ENCODE measurements at regions of chr11 and their contacts with region 1.

Region 1: GRCh38 chr11:47176328-47177228 is at the start of gene ARFGAP2:
- DNase-seq: peak; percentile 97
- H3K4me3 Mint-ChIP-seq: peak within 1 kb of the TSS; percentile 98
- H3K27ac Mint-ChIP-seq: peak within 1 kb of the TSS; percentile 100
- H3K4me1 Mint-ChIP-seq: peaks cover 40% of the 10 kb centered on the region
- H3K27me3 Mint-ChIP-seq: no peaks in the 10 kb centered on the region
- total RNA-seq, gene ARFGAP2: 66.5 to 66.6 TPM

Region 2: DNA sequence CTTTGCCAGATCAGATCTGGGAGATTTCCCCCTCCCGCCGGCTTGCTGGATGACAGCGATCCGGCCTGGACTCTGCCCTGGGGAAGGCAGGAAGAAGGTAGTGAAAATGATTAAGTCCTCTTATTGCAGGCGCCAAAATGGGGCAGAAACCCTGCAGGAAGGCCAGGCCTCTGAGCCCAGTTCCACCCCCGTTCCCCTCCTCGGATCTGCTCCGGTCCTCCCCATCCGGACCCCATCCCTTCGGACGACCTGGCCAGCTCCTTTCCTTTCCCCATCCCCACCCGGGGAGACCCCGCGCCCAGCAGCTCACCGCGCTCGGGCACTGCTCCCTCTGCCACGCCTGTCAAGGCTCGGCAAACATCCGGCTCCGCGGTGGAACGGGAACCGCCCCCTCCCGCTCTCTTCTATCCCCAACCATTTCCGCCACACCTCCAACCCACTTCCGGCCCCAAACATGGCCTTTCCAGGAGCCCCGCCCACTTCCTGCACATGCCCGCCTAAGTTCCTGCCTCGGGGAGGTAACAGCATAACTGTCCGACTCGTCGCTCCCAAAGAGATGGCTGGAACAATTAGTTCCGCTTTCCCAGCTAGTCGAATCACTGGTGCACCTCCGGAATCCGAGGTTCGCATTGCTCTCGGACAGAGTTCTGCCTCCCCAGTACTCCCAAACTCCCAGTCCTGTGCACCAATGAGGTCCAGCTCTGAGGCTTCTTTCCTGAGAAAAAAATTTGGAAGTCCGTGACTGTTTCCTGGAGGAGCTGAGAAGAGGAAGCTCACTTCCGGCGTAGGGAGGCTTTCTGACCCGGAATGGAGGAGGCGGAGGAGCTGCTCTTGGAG is 476.1 kb before region 1 on chr11 and contains the starts of genes ARHGAP1 and ZNF408:
- CTCF ChIA-PET with region 1: no interaction called
- POLR2A ChIA-PET with region 1: no interaction called
- intact Hi-C with region 1: loop called (anchors 2 kb)
- DNase-seq: peak; percentile 100
- H3K4me3 Mint-ChIP-seq: peak within 1 kb of the TSS; percentile 92
- H3K27ac Mint-ChIP-seq: peak within 1 kb of the TSS; percentile 95
- H3K4me1 Mint-ChIP-seq: peaks cover 50% of the 10 kb centered on the region
- H3K27me3 Mint-ChIP-seq: no peaks in the 10 kb centered on the region
- total RNA-seq, gene ARHGAP1: 45.8 to 46.2 TPM
- total RNA-seq, gene ZNF408: 9.4 to 10.7 TPM

Region 3: DNA sequence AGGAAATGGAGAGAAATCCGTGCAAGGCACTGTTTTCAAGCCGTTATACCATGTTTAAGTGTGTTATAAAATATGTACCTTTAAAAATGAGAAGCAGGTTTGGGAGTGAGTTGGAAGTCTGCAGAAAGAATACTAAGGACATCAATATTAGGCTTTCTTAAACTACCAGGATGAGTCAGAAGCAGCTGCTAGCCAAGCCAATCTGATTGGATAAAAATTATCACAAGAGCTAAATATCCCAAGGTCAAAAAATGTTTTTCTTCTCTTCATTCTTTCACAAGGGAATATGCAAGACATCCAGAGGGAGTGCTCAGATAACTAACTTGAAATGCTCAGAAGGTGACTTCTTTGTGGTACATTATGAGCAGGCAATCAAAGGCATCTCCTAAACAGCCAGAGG is 311.2 kb before region 1 on chr11:
- CTCF ChIA-PET with region 1: no interaction called
- POLR2A ChIA-PET with region 1: no interaction called
- intact Hi-C with region 1: no loop called
- DNase-seq: no peak
- H3K4me3 Mint-ChIP-seq: no peak overlapping the region
- H3K27ac Mint-ChIP-seq: no peak overlapping the region
- H3K4me1 Mint-ChIP-seq: no peaks in the 10 kb centered on the region
- H3K27me3 Mint-ChIP-seq: no peaks in the 10 kb centered on the region

Region 4: GRCh38 chr11:47213985-47214564 is 37.5 kb after region 1 on chr11:
- CTCF ChIA-PET with region 1: interaction called, 22 read pairs
- POLR2A ChIA-PET with region 1: interaction called, 25 read pairs
- intact Hi-C with region 1: loop called (anchors 1 kb)
- DNase-seq: peak; percentile 94
- H3K4me3 Mint-ChIP-seq: peak overlapping the region; percentile 97
- H3K27ac Mint-ChIP-seq: peak overlapping the region; percentile 99
- H3K4me1 Mint-ChIP-seq: peaks cover 28% of the 10 kb centered on the region
- H3K27me3 Mint-ChIP-seq: no peaks in the 10 kb centered on the region

Region 5: DNA sequence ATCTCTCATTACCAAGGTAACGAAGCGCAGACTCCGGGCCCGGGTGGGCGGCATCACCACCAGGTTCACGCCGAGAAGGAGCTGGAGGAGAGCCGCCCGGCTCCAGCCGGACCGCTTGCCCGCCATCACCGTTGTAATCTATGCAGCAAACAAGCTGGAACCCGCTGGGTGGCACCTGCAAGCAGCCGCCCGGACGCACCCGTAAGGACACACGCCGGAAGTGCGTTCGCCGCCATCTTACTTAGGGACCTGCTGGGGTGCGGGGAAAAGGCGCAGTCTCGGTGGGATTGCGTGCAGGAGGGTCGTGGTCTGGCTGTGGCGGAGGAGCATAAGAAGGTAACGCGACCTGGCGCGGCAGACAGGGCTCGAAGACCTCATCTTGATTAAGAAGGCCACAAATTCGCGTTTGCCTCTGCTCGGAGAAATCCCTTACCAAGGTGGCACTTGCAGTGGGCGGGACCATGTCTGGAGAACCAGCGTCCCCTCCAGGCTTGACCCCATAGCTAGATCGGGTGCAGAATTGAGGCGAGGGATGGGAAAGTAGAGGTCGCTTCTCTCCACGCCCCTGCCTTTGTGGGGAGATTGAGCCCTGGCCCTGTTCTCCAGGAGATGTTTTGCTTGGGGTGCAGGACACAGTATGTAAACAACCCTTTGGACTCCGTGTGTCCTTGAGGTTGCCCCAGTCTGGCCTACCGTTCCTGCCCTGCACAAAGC is 72.2 kb after region 1 on chr11 and contains the start of gene ACP2:
- CTCF ChIA-PET with region 1: interaction called, 28 read pairs
- POLR2A ChIA-PET with region 1: interaction called, 5 read pairs
- intact Hi-C with region 1: loop called (anchors 5 kb)
- DNase-seq: peak; percentile 93
- H3K4me3 Mint-ChIP-seq: peak within 1 kb of the TSS; percentile 98
- H3K27ac Mint-ChIP-seq: peak within 1 kb of the TSS; percentile 95
- H3K4me1 Mint-ChIP-seq: peaks cover 20% of the 10 kb centered on the region
- H3K27me3 Mint-ChIP-seq: no peaks in the 10 kb centered on the region
- total RNA-seq, gene ACP2: 10.1 to 12.2 TPM

Region 6: GRCh38 chr11:47269002-47269828 is 92.6 kb after region 1 on chr11:
- CTCF ChIA-PET with region 1: interaction called, 5 read pairs
- POLR2A ChIA-PET with region 1: no interaction called
- intact Hi-C with region 1: loop called (anchors 1 kb)
- DNase-seq: peak; percentile 90
- H3K4me3 Mint-ChIP-seq: peak overlapping the region; percentile 84
- H3K27ac Mint-ChIP-seq: peak overlapping the region; percentile 99
- H3K4me1 Mint-ChIP-seq: peaks cover 44% of the 10 kb centered on the region
- H3K27me3 Mint-ChIP-seq: no peaks in the 10 kb centered on the region

Region 7: DNA sequence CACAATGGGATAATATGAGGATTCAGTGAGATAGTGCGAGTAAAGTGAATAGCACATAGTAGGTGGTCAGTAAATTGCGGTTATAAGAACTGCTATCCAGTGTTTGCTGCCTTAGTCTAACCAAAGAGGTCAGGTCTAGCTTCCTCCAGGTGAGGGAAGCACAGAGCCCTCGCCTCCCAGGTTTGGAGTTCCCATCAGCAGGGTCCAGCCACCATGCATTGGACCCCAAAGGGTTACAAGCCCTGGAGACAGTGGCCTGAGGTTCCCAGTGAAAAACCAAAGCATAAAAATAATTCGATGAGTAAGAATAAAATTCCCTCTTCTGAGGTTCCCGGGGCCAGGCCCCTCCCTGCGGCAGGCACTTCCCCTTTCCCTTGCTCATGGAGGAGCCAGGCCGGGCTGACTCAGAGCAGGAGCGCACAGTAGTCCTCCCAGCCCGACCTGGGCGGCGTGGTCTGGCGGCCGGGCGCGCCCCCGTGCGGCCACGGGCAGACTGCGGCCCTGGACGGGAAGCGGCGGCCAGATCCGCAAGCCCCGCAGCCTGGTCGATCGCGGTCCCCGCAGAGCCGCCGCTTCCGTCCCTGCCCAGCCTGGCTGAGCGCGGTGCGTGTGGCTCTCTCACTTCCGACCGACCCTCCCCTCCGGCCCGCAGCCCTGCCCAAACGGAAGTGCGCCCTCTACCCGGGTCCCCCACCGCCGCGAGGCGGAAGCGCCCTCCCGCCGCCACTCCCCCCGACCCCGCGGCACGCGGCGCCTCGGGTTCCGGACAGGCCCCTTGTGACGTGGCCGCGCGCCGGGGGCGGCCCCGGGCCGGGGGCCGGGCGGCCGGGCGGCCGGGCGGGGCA is 231.4 kb after region 1 on chr11 and contains the start of gene SLC39A13:
- CTCF ChIA-PET with region 1: interaction called, 5 read pairs
- POLR2A ChIA-PET with region 1: no interaction called
- intact Hi-C with region 1: loop called (anchors 2 kb)
- DNase-seq: peak; percentile 95
- H3K4me3 Mint-ChIP-seq: peak within 1 kb of the TSS; percentile 86
- H3K27ac Mint-ChIP-seq: peak within 1 kb of the TSS; percentile 95
- H3K4me1 Mint-ChIP-seq: peaks cover 17% of the 10 kb centered on the region
- H3K27me3 Mint-ChIP-seq: no peaks in the 10 kb centered on the region
- total RNA-seq, gene SLC39A13: 17.7 to 18.0 TPM

Region 8: GRCh38 chr11:47642099-47642855 is 465.7 kb after region 1 on chr11 and contains the start of gene MTCH2:
- CTCF ChIA-PET with region 1: no interaction called
- POLR2A ChIA-PET with region 1: no interaction called
- intact Hi-C with region 1: loop called (anchors 2 kb)
- DNase-seq: peak; percentile 98
- H3K4me3 Mint-ChIP-seq: peak within 1 kb of the TSS; percentile 94
- H3K27ac Mint-ChIP-seq: peak within 1 kb of the TSS; percentile 89
- H3K4me1 Mint-ChIP-seq: peaks cover 20% of the 10 kb centered on the region
- H3K27me3 Mint-ChIP-seq: no peaks in the 10 kb centered on the region
- total RNA-seq, gene MTCH2: 110 to 117 TPM